G401 (cell line): ENCODE measurements at regions of chr10 and their contacts with region 1.

Region 1: DNA sequence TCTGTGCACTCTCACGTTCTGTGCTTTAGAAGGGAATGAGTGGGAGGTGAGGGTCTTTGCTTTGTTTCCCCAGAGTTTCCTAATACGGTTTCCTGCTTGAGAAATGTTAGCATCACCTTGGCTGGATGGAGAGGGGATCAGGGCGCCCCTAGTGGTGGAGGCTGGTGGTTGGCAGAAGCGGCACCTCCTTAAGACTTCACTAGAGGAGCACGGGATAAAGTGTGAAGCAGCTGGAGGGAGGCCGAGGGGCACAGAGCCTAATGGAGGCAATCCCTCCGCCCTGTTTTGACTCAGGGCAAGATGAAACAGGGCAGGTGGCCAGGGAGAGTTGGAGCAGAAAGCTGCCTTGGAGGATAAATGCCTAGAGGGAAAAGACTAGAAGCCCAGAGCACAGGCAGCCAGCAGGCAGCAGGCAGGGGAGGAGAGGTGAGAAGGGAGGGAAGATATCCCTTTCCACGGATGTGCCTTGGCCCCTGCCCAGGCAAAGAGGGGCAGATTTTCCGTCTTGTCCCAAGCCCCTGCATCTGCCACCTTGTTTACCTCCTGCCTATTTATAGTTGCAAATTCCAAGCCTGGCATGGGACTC is 56.0 kb upstream of the BTRC start:
- DNase-seq: peak; percentile 76

Region 2: DNA sequence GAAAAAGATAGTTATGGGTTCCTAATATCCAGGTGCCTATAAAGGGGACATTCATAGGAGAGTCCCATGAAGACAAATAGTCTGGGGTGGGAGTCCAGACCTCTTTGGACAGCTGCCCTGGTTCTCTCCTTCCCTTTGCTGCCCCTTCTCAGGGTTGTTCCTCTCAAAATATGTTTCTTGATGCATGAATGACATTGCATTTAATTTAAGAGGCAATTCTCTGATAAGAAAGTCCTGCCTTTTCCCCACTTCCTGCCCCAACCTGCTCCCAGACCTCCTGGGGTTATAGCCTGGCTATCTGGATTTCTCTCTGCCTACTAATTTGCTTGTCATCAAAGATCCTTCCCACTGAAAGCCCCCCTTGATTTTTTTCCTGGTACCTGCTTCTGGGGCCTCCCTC is 43.4 kb after region 1 on chr10:
- in situ Hi-C with region 1: loop called (anchors 5 kb)
- DNase-seq: no peak

Region 3: GRCh38 chr10:101367569-101368453 is 69.8 kb after region 1 on chr10:
- in situ Hi-C with region 1: no loop called
- DNase-seq: no peak

Region 4: GRCh38 chr10:101587725-101588653 is 290.0 kb after region 1 on chr10 and contains the starts of genes DPCD and POLL:
- in situ Hi-C with region 1: loop called (anchors 25 kb)
- DNase-seq: peak; percentile 98
- total RNA-seq, gene DPCD: 361 and 419 TPM in 2 replicates
- total RNA-seq, gene POLL: 87.8 and 94.8 TPM in 2 replicates

Region 5: DNA sequence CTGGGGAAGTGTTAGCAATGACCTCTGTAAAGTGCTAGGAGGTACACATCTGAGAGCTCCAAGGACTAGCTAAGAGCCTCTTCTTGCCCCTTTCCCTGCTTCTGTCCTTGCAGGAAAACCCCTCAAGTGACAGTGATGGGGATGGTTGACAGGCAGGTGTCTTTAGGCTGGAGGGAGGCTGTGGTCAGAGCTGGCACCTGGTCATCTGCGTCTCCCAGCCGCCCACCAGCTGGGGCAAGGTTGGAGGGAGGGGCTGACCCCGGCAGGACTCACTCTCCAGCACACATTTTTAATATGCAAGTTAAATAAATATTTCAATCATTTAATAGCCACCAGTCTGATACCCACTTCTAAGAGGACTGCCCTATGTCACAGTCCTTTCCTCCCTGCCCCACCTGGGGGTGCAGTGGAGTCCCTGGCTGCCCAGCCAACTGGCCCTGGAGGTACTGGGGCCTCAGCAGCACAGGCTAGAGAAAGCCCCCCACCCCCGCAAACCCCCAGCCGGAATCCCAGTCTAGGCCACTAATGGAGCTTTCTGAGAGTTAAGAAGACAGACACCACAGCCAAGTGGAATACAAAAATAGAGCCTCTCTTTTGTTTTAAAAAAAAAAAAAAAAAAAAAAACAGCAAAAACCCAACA is 471.7 kb after region 1 on chr10:
- in situ Hi-C with region 1: no loop called
- DNase-seq: no peak